Motor neuron (in vitro differentiated cells): ENCODE measurements at regions of chr14 and their contacts with region 1.

Region 1: GRCh38 chr14:21557084-21557901 is 22.6 kb downstream of the OR10G3 start:
- ATAC-seq: peak; percentile 70 to 98 (median 92)
- H3K4me3 ChIP-seq: peak overlapping the region; percentile 24 to 35 (median 26)
- H3K27ac ChIP-seq: peak overlapping the region in 1 of 2 donors; percentile 8
- H3K4me1 ChIP-seq: peaks cover 2 to 7% of the 10 kb centered on the region in 2 donors

Region 2: GRCh38 chr14:21505012-21505553 is 52.2 kb before region 1 on chr14:
- in situ Hi-C with region 1: loop called in 1 of 9 experiments (anchors 10 kb)
- ATAC-seq: peak in 2 of 8 experiments; percentile 18 to 45
- H3K4me3 ChIP-seq: no peak overlapping the region
- H3K27ac ChIP-seq: no peak overlapping the region
- H3K4me1 ChIP-seq: peaks cover 4 to 5% of the 10 kb centered on the region in 2 donors